Mammary epithelial cell (primary cell): ENCODE measurements at regions of chr5 and their contacts with region 1.

Region 1: GRCh38 chr5:113294311-113295110 is 140.3 kb downstream of the TSSK1B start:
- DNase-seq: peak; percentile 79
- H3K4me3 ChIP-seq: peak overlapping the region; percentile 64 to 77 (median 71)
- H3K27ac ChIP-seq: peak overlapping the region; percentile 70
- H3K4me1 ChIP-seq: peaks cover 18% of the 10 kb centered on the region
- H3K27me3 ChIP-seq: no peaks in the 10 kb centered on the region
- CTCF ChIP-seq: peak in 1 of 2 donors; percentile 28

Region 2: DNA sequence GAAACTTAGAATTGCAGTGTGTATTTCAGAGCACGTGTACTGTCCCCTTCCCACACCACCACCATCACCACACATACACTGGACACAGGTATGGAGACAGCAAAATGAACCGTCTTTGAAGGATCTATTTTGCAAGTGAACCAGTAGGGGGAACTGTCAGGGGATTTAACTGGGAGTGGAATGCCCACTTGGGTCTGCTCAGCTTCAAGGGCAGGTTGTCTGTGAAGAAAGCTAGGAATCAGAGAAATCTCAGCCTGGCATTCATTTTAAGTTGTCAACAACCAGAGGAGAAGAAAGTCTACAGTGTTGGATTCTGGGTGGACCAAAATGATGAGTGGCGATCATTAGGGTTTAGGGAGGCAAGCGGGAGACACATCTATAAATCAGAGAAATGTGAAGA is 170.9 kb before region 1 on chr5:
- CTCF ChIA-PET with region 1: interaction called, 3 read pairs
- dilution Hi-C with region 1: no loop called
- in situ Hi-C with region 1: no loop called
- intact Hi-C with region 1: loop called (anchors 1 kb)
- DNase-seq: no peak
- H3K4me3 ChIP-seq: no peak overlapping the region
- H3K27ac ChIP-seq: no peak overlapping the region
- H3K4me1 ChIP-seq: peaks cover 25% of the 10 kb centered on the region
- H3K27me3 ChIP-seq: no peaks in the 10 kb centered on the region
- CTCF ChIP-seq: peak; percentile 1 to 3

Region 3: GRCh38 chr5:113190347-113190746 is 104.2 kb before region 1 on chr5:
- CTCF ChIA-PET with region 1: no interaction called
- dilution Hi-C with region 1: loop called (anchors 5 kb)
- in situ Hi-C with region 1: no loop called
- intact Hi-C with region 1: no loop called
- DNase-seq: no peak
- H3K4me3 ChIP-seq: no peak overlapping the region
- H3K27ac ChIP-seq: no peak overlapping the region
- H3K4me1 ChIP-seq: peaks cover 26% of the 10 kb centered on the region
- H3K27me3 ChIP-seq: no peaks in the 10 kb centered on the region
- CTCF ChIP-seq: no peak

Region 4: GRCh38 chr5:113230711-113231652 is 63.5 kb before region 1 on chr5:
- CTCF ChIA-PET with region 1: no interaction called
- dilution Hi-C with region 1: no loop called
- in situ Hi-C with region 1: no loop called
- intact Hi-C with region 1: loop called (anchors 2 kb)
- DNase-seq: peak; percentile 75
- H3K4me3 ChIP-seq: no peak overlapping the region
- H3K27ac ChIP-seq: peak overlapping the region; percentile 76
- H3K4me1 ChIP-seq: peaks cover 40% of the 10 kb centered on the region
- H3K27me3 ChIP-seq: no peaks in the 10 kb centered on the region
- CTCF ChIP-seq: no peak

Region 5: GRCh38 chr5:113266913-113267227 is 27.6 kb before region 1 on chr5:
- CTCF ChIA-PET with region 1: no interaction called
- dilution Hi-C with region 1: no loop called
- in situ Hi-C with region 1: no loop called
- intact Hi-C with region 1: loop called (anchors 1 kb)
- DNase-seq: peak; percentile 89
- H3K4me3 ChIP-seq: peak overlapping the region in 2 of 3 experiments; percentile 12 to 16
- H3K27ac ChIP-seq: peak overlapping the region; percentile 96
- H3K4me1 ChIP-seq: peaks cover 67% of the 10 kb centered on the region
- H3K27me3 ChIP-seq: no peaks in the 10 kb centered on the region
- CTCF ChIP-seq: no peak